ENCODE measurements at regions of chr4 and their contacts with region 1.

Region 1: DNA sequence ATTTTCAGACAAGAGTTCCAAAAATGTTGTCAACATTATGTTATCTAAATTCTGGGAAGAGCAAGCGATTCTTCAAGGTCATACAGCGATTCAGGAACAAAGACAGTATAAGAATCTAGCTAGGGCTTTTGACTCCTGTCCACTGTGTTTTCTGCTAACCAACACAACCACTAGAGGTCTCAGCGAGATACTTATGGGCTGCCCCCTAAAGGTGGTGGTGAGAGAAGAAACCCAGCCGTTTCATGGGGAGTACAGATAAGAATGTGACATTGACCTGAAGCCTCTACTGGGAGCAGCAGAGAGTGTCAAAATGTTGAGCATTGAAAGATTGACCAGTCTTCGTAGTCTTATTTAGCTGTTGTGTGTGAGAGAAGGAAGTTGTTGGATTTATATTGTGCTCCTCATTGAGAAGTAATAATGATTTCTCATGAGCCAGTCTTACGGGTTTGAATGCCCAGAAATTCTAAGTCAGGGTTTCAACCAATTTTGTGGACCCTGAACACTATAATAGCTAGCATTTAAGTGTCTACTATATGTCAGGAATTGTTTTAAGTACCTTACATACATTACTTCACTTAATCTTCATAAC is 168.3 kb downstream of the SPRY1 start:
- DNase-seq: peak; percentile 52
- H3K4me3 Mint-ChIP-seq: no peak overlapping the region
- H3K27ac Mint-ChIP-seq: no peak overlapping the region
- H3K4me1 Mint-ChIP-seq: no peaks in the 10 kb centered on the region
- H3K27me3 Mint-ChIP-seq: peaks cover 12% of the 10 kb centered on the region

Region 2: DNA sequence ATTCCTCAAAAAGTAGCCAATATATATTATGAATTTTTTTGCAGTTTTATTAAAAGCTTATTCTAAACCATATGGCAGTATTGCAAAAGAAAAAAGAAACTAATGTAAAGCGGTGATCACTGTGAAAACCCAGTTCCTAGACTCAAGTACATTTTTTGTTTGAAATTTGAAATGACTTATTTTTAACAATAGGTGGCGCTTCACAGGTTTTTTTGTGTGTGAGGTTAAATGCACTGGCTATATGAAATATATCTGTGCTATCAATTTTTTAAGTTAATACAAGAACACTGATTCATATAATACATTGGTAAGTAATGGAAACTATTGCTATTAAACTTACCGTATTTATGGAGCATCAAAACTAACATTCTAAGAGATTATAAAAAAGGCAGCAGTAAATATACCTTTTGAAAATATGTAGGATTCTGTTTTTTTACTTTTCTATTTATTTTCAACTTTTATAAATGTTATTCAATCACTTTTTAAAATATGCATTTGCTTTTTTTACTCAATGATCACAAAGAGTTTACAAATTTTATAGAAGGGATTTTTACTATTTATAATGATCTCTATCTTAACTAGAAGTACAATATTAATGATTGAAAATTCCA is 173.9 kb before region 1 on chr4:
- CTCF ChIA-PET with region 1: interaction called, 11 read pairs
- DNase-seq: no peak
- H3K4me3 Mint-ChIP-seq: no peak overlapping the region
- H3K27ac Mint-ChIP-seq: no peak overlapping the region
- H3K4me1 Mint-ChIP-seq: no peaks in the 10 kb centered on the region
- H3K27me3 Mint-ChIP-seq: peaks cover 9% of the 10 kb centered on the region

Region 3: DNA sequence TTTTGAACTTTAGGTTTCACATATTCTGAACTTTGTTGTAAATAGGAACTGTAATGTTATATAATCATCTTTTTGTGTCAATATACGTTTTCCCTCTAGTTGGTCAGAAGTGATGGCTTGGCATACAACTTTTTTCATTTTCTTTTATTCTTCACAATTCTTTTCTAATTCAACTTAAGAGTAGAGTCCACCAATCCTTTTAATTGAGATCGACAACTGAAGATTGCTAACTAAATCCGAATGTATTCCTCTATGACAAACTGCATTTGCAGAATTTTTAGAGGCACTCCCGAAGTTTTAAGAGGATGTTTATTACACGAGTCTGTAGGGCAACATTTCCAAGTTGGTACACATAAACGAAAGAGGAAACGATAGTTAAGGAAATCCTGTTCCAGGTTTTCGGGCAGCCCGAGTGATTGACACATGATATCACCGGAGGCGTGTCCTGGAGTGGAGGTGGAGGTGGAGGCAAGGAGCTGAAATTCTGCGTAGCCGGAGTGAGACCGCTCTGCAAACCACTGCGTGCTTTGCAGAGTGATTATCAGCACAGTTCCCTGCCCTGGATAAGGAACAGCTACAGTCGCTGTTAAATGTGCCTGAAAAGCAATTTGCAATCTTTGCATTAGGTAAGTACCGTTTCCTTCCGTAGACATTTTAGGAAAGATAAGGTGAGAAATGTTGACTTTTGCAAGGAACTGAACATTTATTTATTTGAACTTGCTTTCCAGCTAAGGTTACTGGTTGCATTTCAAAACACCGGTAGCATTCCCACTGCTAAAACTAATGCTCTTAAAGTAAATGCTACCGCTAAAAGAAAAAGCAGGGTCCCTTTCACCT is 168.3 kb before region 1 on chr4 and contains the start of gene SPRY1:
- CTCF ChIA-PET with region 1: interaction called, 11 read pairs
- DNase-seq: peak; percentile 85
- H3K4me3 Mint-ChIP-seq: peak within 1 kb of the TSS; percentile 81
- H3K27ac Mint-ChIP-seq: peak within 1 kb of the TSS; percentile 66
- H3K4me1 Mint-ChIP-seq: peaks cover 36% of the 10 kb centered on the region
- H3K27me3 Mint-ChIP-seq: peaks cover 48% of the 10 kb centered on the region

Region 4: DNA sequence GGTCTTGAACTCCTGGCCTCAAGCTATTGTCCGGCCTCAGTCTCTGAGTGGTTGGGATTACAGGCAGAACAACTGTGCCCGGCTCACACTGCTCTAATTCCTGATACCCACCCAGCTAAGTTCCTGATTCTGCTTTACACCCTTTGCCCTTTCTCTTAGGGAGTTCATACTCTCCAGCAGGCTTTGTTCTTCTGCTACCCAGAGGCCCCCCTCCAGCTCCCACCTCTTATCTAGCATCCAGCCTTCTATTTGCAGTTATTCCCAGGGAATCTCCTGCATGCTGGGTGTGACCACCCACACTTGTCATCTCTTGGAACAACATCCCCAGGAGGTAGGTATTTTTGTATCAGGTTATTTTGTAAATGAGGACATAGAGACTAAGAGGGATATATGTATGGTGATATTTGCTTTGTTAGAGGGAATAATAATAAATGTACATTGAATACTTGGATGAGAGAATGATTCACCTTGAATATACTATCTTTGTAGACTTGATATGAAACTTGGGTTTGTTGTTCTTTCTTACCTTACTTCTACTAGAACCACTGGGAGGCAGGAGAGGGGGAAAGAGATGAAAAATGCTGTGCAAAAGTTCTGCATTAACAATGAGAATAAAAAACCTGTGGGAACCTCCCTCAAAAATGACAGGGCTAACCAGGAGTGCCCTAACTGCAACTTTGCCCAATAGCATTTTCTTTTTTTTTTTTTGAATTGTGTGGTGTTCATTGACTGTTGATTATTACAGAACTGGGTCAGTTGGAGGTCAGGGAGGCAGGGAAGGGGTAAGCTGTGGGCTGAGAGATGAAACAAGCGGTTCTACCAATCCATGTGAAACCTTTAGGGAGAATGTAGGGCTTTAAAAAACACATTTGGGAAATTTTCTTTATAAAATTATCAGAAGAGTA is 10.9 kb before region 1 on chr4:
- CTCF ChIA-PET with region 1: interaction called, 15 read pairs
- DNase-seq: no peak
- H3K4me3 Mint-ChIP-seq: no peak overlapping the region
- H3K27ac Mint-ChIP-seq: no peak overlapping the region
- H3K4me1 Mint-ChIP-seq: no peaks in the 10 kb centered on the region
- H3K27me3 Mint-ChIP-seq: peaks cover 9% of the 10 kb centered on the region

Region 5: GRCh38 chr4:123661080-123661737 is 96.4 kb after region 1 on chr4:
- CTCF ChIA-PET with region 1: interaction called, 16 read pairs
- DNase-seq: no peak
- H3K4me3 Mint-ChIP-seq: no peak overlapping the region
- H3K27ac Mint-ChIP-seq: no peak overlapping the region
- H3K4me1 Mint-ChIP-seq: no peaks in the 10 kb centered on the region
- H3K27me3 Mint-ChIP-seq: peaks cover 17% of the 10 kb centered on the region